HEK293 (cell line): ENCODE measurements at regions of chrX and their contacts with region 1.

Region 1: DNA sequence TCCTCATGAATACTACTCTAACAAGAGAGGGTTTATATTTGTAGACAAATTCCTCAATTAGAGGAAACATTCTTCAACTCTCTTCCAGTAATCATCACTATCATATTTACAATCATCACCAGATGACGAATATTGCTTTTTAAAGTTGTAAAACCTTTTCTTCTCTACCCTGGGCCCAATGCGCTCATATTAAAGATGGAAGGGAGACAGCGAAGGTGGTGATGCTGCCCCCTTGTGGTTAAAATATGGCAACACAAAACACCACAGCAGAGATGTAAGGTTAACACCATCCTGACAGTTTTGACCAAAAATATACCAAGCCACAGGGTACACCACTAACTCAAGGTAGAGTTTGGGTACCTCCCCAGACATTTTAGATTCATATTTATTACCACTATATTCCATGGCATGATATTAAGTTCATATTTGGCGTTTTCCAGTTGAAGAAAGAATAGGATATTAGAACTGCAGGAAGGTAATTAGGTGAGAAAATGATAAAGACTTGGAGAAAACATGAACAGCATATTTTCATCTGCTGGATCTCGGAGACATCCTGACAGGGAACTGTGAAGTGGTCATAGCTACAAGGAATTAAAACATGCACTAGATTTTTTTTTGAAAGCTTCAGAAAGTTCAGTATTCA is 72.8 kb downstream of the SLC9A7 start:
- H3K4me3 ChIP-seq: no peak overlapping the region
- H3K27ac ChIP-seq: no peak overlapping the region
- H3K4me1 ChIP-seq: no peaks in the 10 kb centered on the region; the same call in 1 of the 2 replicates
- CTCF ChIP-seq: no peak

Region 2: GRCh38 chrX:46531442-46531841 is 154.7 kb before region 1 on chrX:
- CTCF ChIA-PET with region 1: no interaction called
- POLR2A ChIA-PET with region 1: no interaction called
- H3K4me3 ChIP-seq: no peak overlapping the region
- H3K27ac ChIP-seq: no peak overlapping the region
- H3K4me1 ChIP-seq: no peaks in the 10 kb centered on the region
- CTCF ChIP-seq: no peak

Region 3: DNA sequence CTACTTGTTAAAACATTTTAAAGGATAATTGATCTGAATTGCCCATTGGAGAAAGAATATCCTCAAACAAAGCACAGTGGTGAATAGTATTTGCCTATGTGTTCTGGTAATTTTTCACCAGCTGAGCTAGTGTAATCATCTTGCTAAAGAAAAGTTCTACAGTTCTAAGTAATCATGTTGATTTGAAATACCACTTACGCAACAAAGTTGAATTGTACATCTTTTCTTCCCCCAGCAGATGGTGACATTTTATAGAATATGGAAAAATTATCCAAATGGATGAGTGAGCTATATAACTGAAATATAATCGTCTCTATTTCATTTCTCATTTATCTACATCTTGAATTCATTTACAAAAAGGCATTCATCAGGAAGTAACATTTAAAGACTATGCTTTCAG is 131.2 kb before region 1 on chrX:
- CTCF ChIA-PET with region 1: interaction called, 10 read pairs
- POLR2A ChIA-PET with region 1: no interaction called
- H3K4me3 ChIP-seq: no peak overlapping the region
- H3K27ac ChIP-seq: no peak overlapping the region
- H3K4me1 ChIP-seq: no peaks in the 10 kb centered on the region
- CTCF ChIP-seq: no peak

Region 4: DNA sequence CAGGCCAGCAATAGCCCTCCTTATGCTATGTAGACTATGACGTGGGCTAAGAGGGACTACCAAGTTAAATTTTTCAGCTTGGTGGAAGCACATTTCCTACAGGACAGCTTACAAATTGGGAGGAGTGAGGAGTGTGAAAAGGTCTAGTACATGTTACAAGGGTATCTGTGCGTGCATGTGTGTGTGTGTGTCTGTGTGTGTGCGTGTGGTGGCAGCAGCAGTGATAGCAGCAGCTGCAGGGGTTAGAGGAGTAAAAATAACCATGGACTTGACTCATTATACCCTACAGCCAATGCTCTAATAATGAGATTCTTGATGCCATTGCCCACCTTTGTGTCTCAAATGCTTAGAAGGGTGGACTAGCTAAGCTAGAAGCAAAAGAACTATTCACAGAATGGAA is 15.8 kb before region 1 on chrX:
- CTCF ChIA-PET with region 1: interaction called, 19 read pairs
- POLR2A ChIA-PET with region 1: no interaction called
- H3K4me3 ChIP-seq: no peak overlapping the region
- H3K27ac ChIP-seq: no peak overlapping the region
- H3K4me1 ChIP-seq: no peaks in the 10 kb centered on the region
- CTCF ChIP-seq: no peak

Region 5: GRCh38 chrX:46704767-46705386 is 18.8 kb after region 1 on chrX:
- CTCF ChIA-PET with region 1: interaction called, 14 read pairs
- POLR2A ChIA-PET with region 1: no interaction called
- H3K4me3 ChIP-seq: no peak overlapping the region
- H3K27ac ChIP-seq: no peak overlapping the region
- H3K4me1 ChIP-seq: no peaks in the 10 kb centered on the region
- CTCF ChIP-seq: no peak

Region 6: GRCh38 chrX:46796574-46797191 is 110.6 kb after region 1 on chrX:
- CTCF ChIA-PET with region 1: interaction called, 13 read pairs
- POLR2A ChIA-PET with region 1: no interaction called
- H3K4me3 ChIP-seq: no peak overlapping the region
- H3K27ac ChIP-seq: no peak overlapping the region
- H3K4me1 ChIP-seq: no peaks in the 10 kb centered on the region
- CTCF ChIP-seq: peak; percentile 59